ENCODE measurements at regions of chr3 and their contacts with region 1.

Region 1: DNA sequence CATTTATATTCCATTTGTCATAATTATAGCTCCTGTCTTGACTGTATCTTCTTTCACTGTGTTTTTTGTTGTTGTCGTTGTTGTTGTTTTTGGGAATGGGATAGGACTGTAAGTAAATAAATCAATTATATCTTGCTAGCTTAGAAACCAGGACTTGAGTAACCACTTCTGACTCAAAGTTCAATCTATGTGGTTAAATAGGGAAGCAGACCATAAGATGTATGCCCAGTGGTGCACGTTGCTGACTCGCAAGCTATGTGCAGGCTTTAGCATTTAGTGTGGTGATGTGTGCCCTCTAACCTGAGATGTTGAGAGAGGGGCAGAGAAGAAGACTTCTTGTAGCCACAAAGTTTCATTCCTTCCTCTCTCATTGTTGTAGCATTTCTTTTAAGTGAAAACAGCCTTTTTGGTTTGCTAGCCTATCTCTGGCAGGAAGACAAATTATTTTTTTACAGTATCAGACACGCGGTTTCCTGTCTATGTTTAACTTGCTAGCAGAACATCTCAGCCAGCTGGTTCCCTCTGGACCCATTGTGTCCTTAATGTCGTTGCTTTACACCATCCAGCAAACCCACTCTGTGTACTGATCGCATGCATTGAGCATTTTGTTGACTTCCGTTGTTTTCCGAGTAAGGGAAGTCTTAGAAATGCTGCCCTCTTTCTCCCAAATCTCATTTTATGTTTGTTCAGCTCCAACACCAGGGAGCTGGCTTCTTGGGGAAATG is 52.1 kb downstream of the TGFBR2 start:
- DNase-seq: peak; percentile 74
- ATAC-seq: peak; percentile 64
- H3K4me3 Mint-ChIP-seq: peak overlapping the region; percentile 60
- H3K27ac Mint-ChIP-seq: peak overlapping the region; percentile 95
- H3K4me1 Mint-ChIP-seq: peaks cover 100% of the 10 kb centered on the region
- H3K27me3 Mint-ChIP-seq: no peaks in the 10 kb centered on the region

Region 2: GRCh38 chr3:30347679-30348216 is 310.7 kb before region 1 on chr3:
- CTCF ChIA-PET with region 1: interaction called, 3 read pairs
- POLR2A ChIA-PET with region 1: interaction called, 5 read pairs
- intact Hi-C with region 1: loop called in 1 of 2 experiments (anchors 5 kb)
- DNase-seq: peak; percentile 67
- ATAC-seq: peak; percentile 97
- H3K4me3 Mint-ChIP-seq: no peak overlapping the region
- H3K27ac Mint-ChIP-seq: peak overlapping the region; percentile 82
- H3K4me1 Mint-ChIP-seq: peaks cover 85% of the 10 kb centered on the region
- H3K27me3 Mint-ChIP-seq: peaks cover 8% of the 10 kb centered on the region

Region 3: GRCh38 chr3:30606301-30607031 is 52.0 kb before region 1 on chr3 and contains the start of gene TGFBR2:
- CTCF ChIA-PET with region 1: interaction called, 9 read pairs
- POLR2A ChIA-PET with region 1: interaction called, 21 read pairs
- intact Hi-C with region 1: loop called (anchors 1 to 2 kb)
- DNase-seq: peak; percentile 94
- ATAC-seq: peak; percentile 70
- H3K4me3 Mint-ChIP-seq: peak within 1 kb of the TSS; percentile 99
- H3K27ac Mint-ChIP-seq: peak within 1 kb of the TSS; percentile 95
- H3K4me1 Mint-ChIP-seq: peaks cover 60% of the 10 kb centered on the region
- H3K27me3 Mint-ChIP-seq: no peaks in the 10 kb centered on the region
- total RNA-seq, gene TGFBR2: 45.5 to 46.6 TPM

Region 4: GRCh38 chr3:30623351-30623750 is 35.1 kb before region 1 on chr3:
- CTCF ChIA-PET with region 1: interaction called, 15 read pairs
- POLR2A ChIA-PET with region 1: interaction called, 13 read pairs
- intact Hi-C with region 1: loop called (anchors 1 kb)
- DNase-seq: no peak
- ATAC-seq: peak; percentile 20
- H3K4me3 Mint-ChIP-seq: peak overlapping the region; percentile 17
- H3K27ac Mint-ChIP-seq: peak overlapping the region; percentile 83
- H3K4me1 Mint-ChIP-seq: peaks cover 96% of the 10 kb centered on the region
- H3K27me3 Mint-ChIP-seq: no peaks in the 10 kb centered on the region

Region 5: DNA sequence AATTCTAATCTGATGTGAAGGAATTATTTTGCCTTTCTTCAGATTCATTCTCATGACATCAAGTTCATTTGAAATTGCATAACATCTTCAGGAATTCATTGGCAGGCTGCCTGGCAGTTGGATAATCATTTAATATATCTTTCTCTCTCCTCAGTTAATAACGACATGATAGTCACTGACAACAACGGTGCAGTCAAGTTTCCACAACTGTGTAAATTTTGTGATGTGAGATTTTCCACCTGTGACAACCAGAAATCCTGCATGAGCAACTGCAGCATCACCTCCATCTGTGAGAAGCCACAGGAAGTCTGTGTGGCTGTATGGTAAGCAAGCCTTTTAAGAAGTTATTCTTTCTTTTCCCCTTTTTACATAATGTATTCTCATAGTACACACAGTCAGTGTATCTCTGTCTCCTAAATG is 13.9 kb before region 1 on chr3:
- CTCF ChIA-PET with region 1: interaction called, 14 read pairs
- POLR2A ChIA-PET with region 1: interaction called, 13 read pairs
- intact Hi-C with region 1: loop called (anchors 1 kb)
- DNase-seq: peak; percentile 74
- ATAC-seq: peak; percentile 62
- H3K4me3 Mint-ChIP-seq: peak overlapping the region; percentile 58
- H3K27ac Mint-ChIP-seq: peak overlapping the region; percentile 94
- H3K4me1 Mint-ChIP-seq: peaks cover 94% of the 10 kb centered on the region
- H3K27me3 Mint-ChIP-seq: no peaks in the 10 kb centered on the region

Region 6: GRCh38 chr3:31105438-31106077 is 447.1 kb after region 1 on chr3:
- CTCF ChIA-PET with region 1: no interaction called
- POLR2A ChIA-PET with region 1: no interaction called
- intact Hi-C with region 1: loop called in 1 of 2 experiments (anchors 10 kb)
- DNase-seq: peak; percentile 38
- ATAC-seq: peak; percentile 47
- H3K4me3 Mint-ChIP-seq: no peak overlapping the region
- H3K27ac Mint-ChIP-seq: no peak overlapping the region
- H3K4me1 Mint-ChIP-seq: peaks cover 40% of the 10 kb centered on the region
- H3K27me3 Mint-ChIP-seq: no peaks in the 10 kb centered on the region

Region 7: DNA sequence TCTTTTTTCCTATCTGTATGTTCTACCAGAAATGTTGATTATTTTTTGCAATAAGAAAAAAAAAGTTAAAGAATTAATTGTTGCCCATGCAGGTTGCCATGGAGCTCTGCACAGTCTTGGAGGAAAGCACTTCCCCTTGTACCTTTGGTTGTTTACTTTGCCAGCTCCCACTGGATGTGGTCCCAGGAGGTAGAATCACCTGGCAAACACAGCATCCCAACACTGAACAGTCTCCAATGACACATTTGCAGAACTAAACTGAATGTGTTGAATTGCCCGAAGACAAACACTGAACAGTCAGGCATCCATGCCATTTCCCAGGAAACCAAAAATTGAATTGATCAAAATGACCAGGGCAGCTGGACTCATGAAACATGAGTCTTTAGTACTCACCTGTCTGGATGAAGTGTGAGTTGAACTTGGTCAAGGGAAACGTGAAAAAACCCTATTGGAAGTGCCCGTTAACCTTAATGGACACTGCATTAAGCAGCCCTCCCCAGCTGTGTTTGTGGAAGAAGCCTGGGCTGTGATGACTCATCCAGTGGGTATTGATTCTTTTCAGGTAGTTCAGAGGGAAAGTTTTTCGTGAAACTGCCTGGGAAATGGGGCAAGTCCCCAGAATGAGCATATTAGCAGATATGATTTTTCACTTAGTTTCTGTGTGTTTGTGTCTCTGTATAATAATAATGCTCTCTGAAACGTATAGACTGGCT is 589.5 kb after region 1 on chr3:
- CTCF ChIA-PET with region 1: no interaction called
- POLR2A ChIA-PET with region 1: no interaction called
- intact Hi-C with region 1: loop called in 1 of 2 experiments (anchors 5 kb)
- DNase-seq: peak; percentile 52
- ATAC-seq: peak; percentile 21
- H3K4me3 Mint-ChIP-seq: no peak overlapping the region
- H3K27ac Mint-ChIP-seq: peak overlapping the region; percentile 51
- H3K4me1 Mint-ChIP-seq: peaks cover 53% of the 10 kb centered on the region
- H3K27me3 Mint-ChIP-seq: peaks cover 3% of the 10 kb centered on the region

Measured in activated CD4-positive, alpha-beta T cell treated with anti-CD3 and anti-CD28 coated beads for 36 hours (primary cell).